Activated B cell treated with CpG ODN at 0.5 μM for 24 hours (primary cell): ENCODE measurements at regions of chr17 and their contacts with region 1.

Region 1: GRCh38 chr17:28097901-28098300 is 55.4 kb downstream of the NLK start:
- DNase-seq: no peak
- ATAC-seq: peak; percentile 84
- H3K4me3 Mint-ChIP-seq: peak overlapping the region; percentile 41
- H3K27ac Mint-ChIP-seq: peak overlapping the region; percentile 68
- H3K4me1 Mint-ChIP-seq: peaks cover 61% of the 10 kb centered on the region
- H3K27me3 Mint-ChIP-seq: no peaks in the 10 kb centered on the region
- CTCF ChIP-seq: no peak

Region 2: GRCh38 chr17:28078341-28079229 is 19.3 kb before region 1 on chr17:
- CTCF ChIA-PET with region 1: interaction called, 3 read pairs
- POLR2A ChIA-PET with region 1: no interaction called
- intact Hi-C with region 1: loop called (anchors 2 kb)
- DNase-seq: no peak
- ATAC-seq: no peak
- H3K4me3 Mint-ChIP-seq: no peak overlapping the region
- H3K27ac Mint-ChIP-seq: no peak overlapping the region
- H3K4me1 Mint-ChIP-seq: peaks cover 67% of the 10 kb centered on the region
- H3K27me3 Mint-ChIP-seq: no peaks in the 10 kb centered on the region
- CTCF ChIP-seq: no peak